Heart right ventricle (tissue), 16 donors: ENCODE measurements at regions of chr18 and their contacts with region 1.

Region 1: DNA sequence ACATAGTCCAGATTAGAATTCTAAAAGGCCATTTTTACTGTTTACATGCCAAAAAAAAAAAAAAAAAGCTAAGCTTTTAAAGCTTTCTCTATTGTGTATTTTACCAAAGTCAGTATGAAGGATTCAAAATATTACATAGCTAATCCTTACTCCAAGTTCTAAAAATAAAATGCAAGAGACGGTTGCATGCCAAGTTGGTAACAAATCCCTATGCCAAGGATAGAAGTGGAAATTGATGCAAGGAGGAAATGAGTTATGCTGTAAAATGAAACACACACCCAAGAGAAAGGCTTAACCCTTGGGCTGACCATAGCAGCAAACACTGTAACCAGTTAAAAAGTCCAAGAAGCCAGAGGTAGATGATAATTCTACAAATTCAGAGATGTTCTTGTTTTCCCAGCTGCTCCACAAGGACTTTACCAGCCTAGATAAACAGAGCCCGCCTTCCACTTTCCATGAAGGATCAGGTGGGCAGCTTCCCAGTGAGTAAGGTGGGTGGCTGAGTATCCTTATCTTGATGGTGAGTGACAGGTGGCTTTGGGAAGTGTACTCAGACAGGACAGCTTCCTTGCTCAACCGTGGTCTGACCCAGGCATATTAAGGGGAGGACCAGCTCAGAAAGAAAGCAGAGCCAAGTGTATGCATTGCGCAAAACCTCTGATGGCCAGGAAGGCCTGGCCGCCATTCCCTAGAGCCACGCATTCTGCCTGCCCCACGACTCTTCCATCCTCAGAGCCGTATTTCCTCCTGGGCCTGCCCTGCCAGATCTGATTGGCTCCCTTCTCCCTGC is 34.4 kb downstream of the ATP8B1 start:
- DNase-seq: no peak
- ATAC-seq: peak; percentile 35 to 80 (median 68)
- H3K4me3 ChIP-seq: no peak overlapping the region
- H3K27ac ChIP-seq: peak overlapping the region in 8 of 10 donors; percentile 22 to 74 (median 60)
- H3K4me1 ChIP-seq: peaks cover 10 to 79% (median 56%) of the 10 kb centered on the region in 9 donors
- H3K27me3 ChIP-seq: no peaks in the 10 kb centered on the region
- CTCF ChIP-seq: no peak

Region 2: DNA sequence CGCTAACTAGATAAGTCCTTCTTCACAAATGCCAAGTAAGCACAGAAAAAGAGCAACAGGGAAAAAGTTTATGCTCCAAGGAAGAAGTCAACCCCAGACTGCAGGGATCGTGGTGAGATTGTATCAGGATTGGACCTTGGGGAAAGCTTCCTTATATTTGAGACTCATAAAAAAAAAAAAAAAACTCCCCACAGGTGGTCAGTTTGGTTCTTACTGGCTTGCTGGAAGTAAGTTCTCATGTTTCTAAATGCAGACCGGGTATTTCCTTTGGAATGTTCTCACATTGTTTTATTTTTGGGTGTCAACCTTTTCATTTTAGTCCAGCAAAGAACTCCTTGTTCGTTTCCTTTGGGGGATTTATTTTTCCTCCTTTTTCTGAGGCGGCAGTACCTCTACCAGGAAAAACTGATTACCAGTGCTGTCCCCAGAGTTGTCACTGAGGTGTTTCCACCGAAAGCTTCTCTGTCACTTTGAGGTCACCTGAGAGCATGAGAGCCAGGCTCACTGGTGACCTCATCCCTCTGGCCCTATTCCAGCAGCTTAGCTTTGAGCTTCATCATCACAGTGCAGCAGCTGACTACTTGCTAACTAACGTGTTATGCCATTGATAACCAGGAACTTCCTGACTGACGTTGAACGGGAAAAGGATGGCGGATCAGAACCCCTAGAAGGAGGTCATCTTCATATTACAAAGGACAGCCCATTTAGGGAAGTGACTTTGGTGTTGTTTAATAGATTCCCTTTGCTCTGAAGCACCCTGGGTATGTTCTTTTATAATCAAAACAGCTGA is 51.1 kb after region 1 on chr18:
- intact Hi-C with region 1: loop called in 1 of 10 experiments (anchors 10 kb)
- DNase-seq: peak in 1 of 2 donors; percentile 86
- ATAC-seq: peak; percentile 80 to 97 (median 92)
- H3K4me3 ChIP-seq: peak overlapping the region in 2 of 10 donors; percentile 2 to 10
- H3K27ac ChIP-seq: peak overlapping the region in 8 of 10 donors; percentile 13 to 76 (median 62)
- H3K4me1 ChIP-seq: peaks cover 0 to 28% (median 18%) of the 10 kb centered on the region in 9 donors
- H3K27me3 ChIP-seq: no peaks in the 10 kb centered on the region
- CTCF ChIP-seq: no peak